Panc1 (cell line): ENCODE measurements at regions of chr7 and their contacts with region 1.

Region 1: GRCh38 chr7:4962872-4963800 is 4.1 kb upstream of the MMD2 start:
- DNase-seq: no peak
- ATAC-seq: peak; percentile 19; the same call in 1 of the 2 replicates
- H3K4me3 ChIP-seq: no peak overlapping the region
- H3K27ac ChIP-seq: no peak overlapping the region
- H3K4me1 ChIP-seq: no peaks in the 10 kb centered on the region
- H3K27me3 ChIP-seq: peaks cover 5% of the 10 kb centered on the region; the same call in 1 of the 2 replicates
- CTCF ChIP-seq: no peak

Region 2: DNA sequence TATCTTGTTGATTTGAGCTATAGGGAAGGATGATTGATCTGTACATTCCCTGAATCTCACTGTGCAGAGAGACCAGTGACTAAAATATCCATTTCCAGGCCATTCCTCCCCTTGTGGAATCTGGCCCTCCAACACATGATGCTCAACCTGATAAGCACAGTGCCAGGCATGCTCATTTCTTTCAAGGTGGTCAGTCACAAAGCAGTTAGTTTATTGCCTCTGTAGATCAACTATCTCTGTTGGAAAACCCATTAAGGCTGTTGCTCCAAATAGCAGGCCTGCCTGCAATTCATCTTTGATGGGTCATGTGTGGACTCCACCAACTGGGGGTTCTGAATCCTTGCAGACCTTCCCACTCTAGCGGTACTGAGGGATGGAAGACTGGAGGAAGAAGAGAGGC is 449.7 kb before region 1 on chr7:
- CTCF ChIA-PET with region 1: no interaction called
- POLR2A ChIA-PET with region 1: no interaction called
- in situ Hi-C with region 1: no loop called
- intact Hi-C with region 1: no loop called
- DNase-seq: no peak
- ATAC-seq: no peak
- H3K4me3 ChIP-seq: no peak overlapping the region
- H3K27ac ChIP-seq: no peak overlapping the region
- H3K4me1 ChIP-seq: no peaks in the 10 kb centered on the region
- H3K27me3 ChIP-seq: peaks cover 29% of the 10 kb centered on the region
- CTCF ChIP-seq: no peak; the same call in 1 of the 2 replicates

Region 3: GRCh38 chr7:4951903-4952636 is 11.1 kb before region 1 on chr7:
- CTCF ChIA-PET with region 1: no interaction called
- POLR2A ChIA-PET with region 1: interaction called, 18 read pairs
- in situ Hi-C with region 1: no loop called
- intact Hi-C with region 1: no loop called
- DNase-seq: no peak
- ATAC-seq: peak; percentile 70
- H3K4me3 ChIP-seq: no peak overlapping the region
- H3K27ac ChIP-seq: no peak overlapping the region
- H3K4me1 ChIP-seq: no peaks in the 10 kb centered on the region
- H3K27me3 ChIP-seq: peaks cover 9% of the 10 kb centered on the region; the same call in 1 of the 2 replicates
- CTCF ChIP-seq: no peak